ENCODE measurements at regions of chr2 and their contacts with region 1.

Region 1: GRCh38 chr2:210252699-210253606 is 27.7 kb upstream of the ACADL start:
- H3K4me3 ChIP-seq: no peak overlapping the region
- H3K27ac ChIP-seq: no peak overlapping the region
- H3K4me1 ChIP-seq: no peaks in the 10 kb centered on the region
- CTCF ChIP-seq: no peak

Region 2: GRCh38 chr2:210020138-210020537 is 232.8 kb before region 1 on chr2:
- CTCF ChIA-PET with region 1: no interaction called
- POLR2A ChIA-PET with region 1: no interaction called
- H3K4me3 ChIP-seq: no peak overlapping the region
- H3K27ac ChIP-seq: no peak overlapping the region
- H3K4me1 ChIP-seq: no peaks in the 10 kb centered on the region
- CTCF ChIP-seq: no peak

Region 3: GRCh38 chr2:210233487-210233886 is 19.5 kb before region 1 on chr2:
- CTCF ChIA-PET with region 1: interaction called, 16 read pairs
- POLR2A ChIA-PET with region 1: no interaction called
- H3K4me3 ChIP-seq: no peak overlapping the region
- H3K27ac ChIP-seq: no peak overlapping the region
- H3K4me1 ChIP-seq: no peaks in the 10 kb centered on the region
- CTCF ChIP-seq: no peak

Region 4: GRCh38 chr2:210269148-210269547 is 16.2 kb after region 1 on chr2:
- CTCF ChIA-PET with region 1: no interaction called
- POLR2A ChIA-PET with region 1: no interaction called
- H3K4me3 ChIP-seq: no peak overlapping the region
- H3K27ac ChIP-seq: no peak overlapping the region
- H3K4me1 ChIP-seq: no peaks in the 10 kb centered on the region
- CTCF ChIP-seq: no peak

Region 5: DNA sequence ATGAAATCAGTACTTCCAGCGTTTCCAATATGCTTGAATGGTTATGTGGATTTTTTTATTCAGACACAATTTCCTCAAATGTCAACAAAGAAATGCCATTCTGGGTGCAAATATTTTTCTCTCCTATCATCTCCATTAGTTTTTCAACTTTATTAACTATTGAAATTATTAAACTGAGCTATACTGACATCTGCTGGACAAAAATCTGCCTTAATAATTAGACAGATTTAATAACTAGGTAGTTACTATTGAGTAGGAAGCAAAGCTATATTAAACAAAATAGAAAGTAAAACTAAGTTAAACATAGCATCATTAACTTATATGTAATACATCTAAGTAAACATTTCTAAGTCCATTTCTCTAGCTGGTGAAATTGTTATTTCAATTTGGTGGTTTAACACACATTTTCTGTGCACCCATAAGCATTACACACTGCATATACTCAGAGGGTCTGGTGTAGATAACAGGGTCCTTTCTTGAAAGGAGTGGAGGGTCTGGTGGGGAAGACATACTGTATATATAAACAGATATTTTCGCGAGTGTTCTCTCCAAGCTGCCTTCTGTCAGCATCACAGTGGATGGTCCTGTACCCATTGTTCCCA is 146.6 kb after region 1 on chr2:
- CTCF ChIA-PET with region 1: interaction called, 26 read pairs
- POLR2A ChIA-PET with region 1: no interaction called
- H3K4me3 ChIP-seq: no peak overlapping the region
- H3K27ac ChIP-seq: no peak overlapping the region
- H3K4me1 ChIP-seq: no peaks in the 10 kb centered on the region
- CTCF ChIP-seq: no peak

Region 6: GRCh38 chr2:210496512-210496911 is 243.6 kb after region 1 on chr2:
- CTCF ChIA-PET with region 1: no interaction called
- POLR2A ChIA-PET with region 1: no interaction called
- H3K4me3 ChIP-seq: no peak overlapping the region
- H3K27ac ChIP-seq: no peak overlapping the region
- H3K4me1 ChIP-seq: no peaks in the 10 kb centered on the region
- CTCF ChIP-seq: no peak